Heart left ventricle (tissue), 16 donors: ENCODE measurements at regions of chr18 and their contacts with region 1.

Region 1: DNA sequence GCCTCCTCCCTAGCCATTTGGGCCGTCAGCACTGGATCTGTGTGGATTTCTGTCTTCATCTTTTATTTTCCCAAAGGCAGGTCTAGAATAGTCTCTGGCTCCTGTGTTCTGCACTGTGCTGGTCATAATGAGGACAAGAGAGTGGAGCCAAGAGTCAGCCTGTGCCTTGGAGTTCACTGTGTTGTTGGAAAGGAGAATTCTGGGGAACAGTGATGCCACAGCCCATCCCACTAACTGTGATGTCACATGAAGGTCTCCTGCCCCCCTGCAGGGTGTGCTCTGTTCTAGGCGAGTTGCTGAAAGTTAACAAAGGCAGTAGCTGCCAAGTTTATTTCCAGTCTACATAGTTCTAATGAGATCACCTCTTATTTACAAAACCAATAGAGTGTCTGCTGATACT is 248.5 kb downstream of the TPGS2 start:
- DNase-seq: peak in 4 of 5 donors; percentile 38 to 65 (median 44)
- ATAC-seq: peak; percentile 89 to 93 (median 92)
- H3K4me3 ChIP-seq: no peak overlapping the region
- H3K27ac ChIP-seq: peak overlapping the region in 10 of 12 donors; percentile 50 to 92 (median 74)
- H3K4me1 ChIP-seq: peaks cover 0 to 30% (median 10%) of the 10 kb centered on the region in 12 donors
- H3K27me3 ChIP-seq: no peaks in the 10 kb centered on the region
- CTCF ChIP-seq: peak in 4 of 12 donors; percentile 6 to 39 (median 16)
- POLR2A ChIP-seq: no peak

Region 2: GRCh38 chr18:36446059-36446458 is 134.2 kb before region 1 on chr18:
- intact Hi-C with region 1: no loop called
- DNase-seq: no peak
- ATAC-seq: peak in 2 of 4 donors; percentile 34 to 52
- H3K4me3 ChIP-seq: no peak overlapping the region
- H3K27ac ChIP-seq: peak overlapping the region in 3 of 12 donors; percentile 4 to 22 (median 20)
- H3K4me1 ChIP-seq: peaks cover 3 to 76% (median 35%) of the 10 kb centered on the region in 12 donors
- H3K27me3 ChIP-seq: no peaks in the 10 kb centered on the region
- CTCF ChIP-seq: no peak
- POLR2A ChIP-seq: no peak

Region 3: DNA sequence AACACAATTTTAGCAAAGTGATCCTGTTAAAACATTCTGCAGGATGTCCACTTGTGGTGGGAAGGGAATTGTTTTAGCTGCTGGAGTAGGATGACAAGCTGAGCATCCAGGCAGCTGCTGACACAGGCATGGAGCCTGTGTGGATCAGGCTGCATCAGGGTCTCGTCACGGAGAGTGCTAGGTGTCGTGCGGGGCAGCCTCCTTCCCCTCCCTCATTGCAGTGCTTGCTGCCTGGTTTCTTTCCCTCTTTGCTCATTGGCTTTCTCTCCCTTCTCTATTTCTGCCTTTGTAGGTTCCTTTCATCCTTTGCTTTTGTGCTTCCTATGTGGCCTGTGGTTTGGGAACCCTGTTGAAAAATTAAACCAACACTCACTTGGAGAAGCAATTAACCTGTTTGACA is 75.7 kb after region 1 on chr18:
- intact Hi-C with region 1: loop called in 1 of 10 experiments (anchors 5 kb)
- DNase-seq: no peak
- ATAC-seq: peak in 1 of 4 donors; percentile 20
- H3K4me3 ChIP-seq: no peak overlapping the region
- H3K27ac ChIP-seq: peak overlapping the region in 6 of 12 donors; percentile 1 to 66 (median 63)
- H3K4me1 ChIP-seq: peaks cover 0 to 22% (median 2%) of the 10 kb centered on the region in 12 donors
- H3K27me3 ChIP-seq: no peaks in the 10 kb centered on the region
- CTCF ChIP-seq: no peak
- POLR2A ChIP-seq: no peak

Region 4: DNA sequence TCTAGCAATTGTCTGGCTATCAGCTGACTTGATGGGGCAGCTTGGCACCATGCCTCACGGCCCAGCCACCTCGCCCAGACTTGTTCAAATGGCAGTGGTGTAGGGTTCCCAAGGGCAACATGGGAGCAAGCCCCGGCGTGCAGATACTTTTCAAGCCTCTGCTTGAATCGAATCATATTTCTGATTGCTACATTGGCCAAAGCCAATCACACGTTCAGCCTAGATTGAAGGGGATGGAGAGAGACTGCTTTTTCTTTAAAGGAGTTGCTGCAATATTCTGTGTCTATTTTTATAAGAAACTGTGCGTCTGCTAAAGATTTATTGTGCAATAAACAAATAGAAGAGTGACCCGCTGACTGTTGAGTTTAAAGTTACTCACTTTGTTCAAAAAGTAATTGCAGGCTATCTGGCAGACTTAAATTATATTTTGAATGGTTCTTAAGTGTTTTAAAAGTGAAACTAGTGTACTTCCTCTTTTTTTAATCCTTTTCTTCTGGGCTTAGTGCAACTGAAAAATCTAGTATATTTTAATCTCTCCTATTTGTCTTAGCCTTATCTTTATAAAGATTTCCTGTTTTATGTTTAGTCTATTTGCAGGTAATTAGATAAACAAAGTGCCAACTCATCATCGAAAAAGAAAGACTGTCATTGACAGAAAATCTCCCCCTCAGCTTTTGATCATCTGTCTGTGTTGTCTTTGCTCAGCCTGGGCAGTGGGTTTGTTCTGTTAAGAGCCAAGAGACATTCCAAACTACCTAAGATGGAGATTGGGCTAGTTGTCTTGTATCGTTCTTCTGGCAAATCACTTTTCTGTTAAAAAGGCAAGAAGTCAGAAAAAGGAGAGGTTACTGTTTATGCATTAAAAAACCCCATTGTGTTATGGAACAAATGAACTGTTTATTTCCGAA is 92.4 kb after region 1 on chr18:
- intact Hi-C with region 1: no loop called
- DNase-seq: peak in 1 of 5 donors; percentile 26
- ATAC-seq: peak in 3 of 4 donors; percentile 32 to 47 (median 36)
- H3K4me3 ChIP-seq: peak overlapping the region in 5 of 12 donors; percentile 2 to 40 (median 7)
- H3K27ac ChIP-seq: peak overlapping the region in 2 of 12 donors; percentile 5 to 21
- H3K4me1 ChIP-seq: peaks cover 0 to 18% (median 0%) of the 10 kb centered on the region in 12 donors
- H3K27me3 ChIP-seq: no peaks in the 10 kb centered on the region
- CTCF ChIP-seq: no peak
- POLR2A ChIP-seq: no peak